ENCODE measurements at regions of chr18 and their contacts with region 1.

Region 1: GRCh38 chr18:35756506-35757117 is 175.1 kb downstream of the GALNT1 start:
- DNase-seq: peak; percentile 63
- H3K4me3 ChIP-seq: no peak overlapping the region
- H3K27ac ChIP-seq: no peak overlapping the region
- H3K4me1 ChIP-seq: no peaks in the 10 kb centered on the region
- H3K27me3 ChIP-seq: peaks cover 3 to 6% of the 10 kb centered on the region in 2 experiments
- CTCF ChIP-seq: peak; percentile 58 to 75
- POLR2A ChIP-seq: no peak

Region 2: DNA sequence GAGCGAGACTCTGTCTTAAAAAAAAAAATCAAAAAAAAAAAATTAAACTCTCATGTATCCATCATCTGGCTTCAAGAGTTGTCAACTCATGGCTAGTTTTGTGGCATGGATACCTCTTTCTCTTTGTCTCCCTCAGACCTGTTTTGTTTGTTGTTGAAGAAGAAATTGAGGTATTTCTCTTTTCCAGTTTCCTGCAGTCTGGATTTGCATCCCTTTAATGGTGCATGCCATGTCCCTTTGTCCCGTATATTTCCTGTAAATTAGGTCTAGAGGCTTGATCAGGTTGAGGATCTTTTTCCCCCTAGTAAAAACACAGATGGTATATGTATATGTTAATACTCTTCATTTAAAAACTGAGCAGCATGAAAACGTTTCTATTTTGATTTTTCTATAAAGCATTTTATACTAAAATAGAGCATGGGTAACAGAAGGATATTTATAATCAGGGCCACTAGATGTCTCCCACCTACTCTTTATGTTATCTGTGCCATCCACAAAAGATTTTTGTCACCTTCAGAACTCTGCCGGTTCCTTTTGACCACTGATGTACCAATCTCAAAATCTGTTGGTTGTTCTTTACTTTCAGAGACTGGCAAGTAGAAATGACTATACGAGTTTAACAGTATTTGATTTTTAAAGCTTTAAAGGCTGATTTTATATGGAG is 95.0 kb before region 1 on chr18:
- CTCF ChIA-PET with region 1: interaction called, 3 read pairs
- POLR2A ChIA-PET with region 1: no interaction called
- dilution Hi-C with region 1: no loop called
- intact Hi-C with region 1: loop called (anchors 1 kb)
- DNase-seq: peak; percentile 47
- H3K4me3 ChIP-seq: no peak overlapping the region
- H3K27ac ChIP-seq: no peak overlapping the region
- H3K4me1 ChIP-seq: peaks cover 15% of the 10 kb centered on the region
- H3K27me3 ChIP-seq: no peaks in the 10 kb centered on the region
- CTCF ChIP-seq: no peak
- POLR2A ChIP-seq: no peak

Region 3: DNA sequence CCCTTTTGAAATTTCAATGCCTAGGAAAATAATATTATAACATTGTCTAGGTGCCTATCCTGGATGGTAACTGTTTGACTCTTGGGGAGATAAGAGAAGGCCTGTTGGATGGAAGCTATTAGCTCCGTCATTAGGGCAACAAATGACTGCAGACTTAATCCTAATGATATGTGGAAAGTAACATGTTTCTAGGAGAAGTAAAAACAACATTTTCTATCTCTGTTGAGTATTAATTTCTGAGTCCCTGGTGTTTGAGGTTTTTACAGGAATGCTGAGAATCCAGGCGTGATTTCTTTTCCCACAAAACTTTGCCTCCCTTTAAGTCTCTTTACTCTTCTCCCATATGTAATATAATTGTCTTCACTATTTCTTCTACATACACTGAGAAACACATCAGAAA is 16.0 kb before region 1 on chr18:
- CTCF ChIA-PET with region 1: interaction called, 10 read pairs
- POLR2A ChIA-PET with region 1: no interaction called
- dilution Hi-C with region 1: no loop called
- intact Hi-C with region 1: no loop called
- DNase-seq: no peak
- H3K4me3 ChIP-seq: no peak overlapping the region
- H3K27ac ChIP-seq: no peak overlapping the region
- H3K4me1 ChIP-seq: no peaks in the 10 kb centered on the region
- H3K27me3 ChIP-seq: no peaks in the 10 kb centered on the region
- CTCF ChIP-seq: no peak
- POLR2A ChIP-seq: no peak

Region 4: DNA sequence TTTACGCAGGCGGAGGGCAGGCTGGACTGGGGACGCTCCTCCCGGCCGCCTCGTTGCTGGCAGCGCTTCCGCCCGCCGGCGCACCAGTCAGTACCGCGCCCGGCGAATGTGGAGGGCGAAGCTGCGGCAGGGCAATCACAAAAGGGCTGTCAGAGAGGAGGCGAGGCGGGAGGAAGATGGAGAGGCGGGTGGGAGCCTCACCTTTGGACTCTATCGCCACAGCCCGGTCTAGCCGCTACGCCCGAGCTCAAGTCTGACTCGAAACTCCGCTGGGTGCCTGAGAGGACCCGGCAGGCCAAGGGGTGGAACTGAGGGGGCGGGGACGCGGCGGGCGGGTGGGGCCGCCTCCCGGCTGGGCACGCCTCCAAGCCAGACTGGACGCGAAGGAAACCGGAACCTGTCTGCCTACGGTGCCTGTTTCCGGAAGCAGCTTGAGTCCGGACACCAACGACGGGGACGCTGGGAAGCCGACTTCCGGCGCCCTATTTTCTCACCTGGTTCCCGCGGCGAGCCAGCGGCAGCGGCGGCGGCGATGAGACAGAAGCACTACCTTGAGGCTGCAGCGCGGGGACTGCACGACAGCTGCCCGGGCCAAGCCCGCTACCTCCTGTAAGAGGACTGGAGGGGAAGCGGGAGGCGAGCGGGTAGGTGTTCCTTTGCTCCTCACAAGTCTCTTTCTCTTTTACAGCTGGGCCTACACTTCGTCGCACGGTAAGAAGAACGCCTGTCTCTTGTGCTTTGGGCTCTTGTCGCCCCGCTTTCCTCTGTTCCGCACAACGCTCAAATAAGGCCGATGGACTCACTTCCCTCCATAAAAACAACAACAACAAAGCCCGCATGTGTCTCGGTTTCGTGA is 215.8 kb after region 1 on chr18 and contains the start of gene RMP24:
- CTCF ChIA-PET with region 1: interaction called, 5 read pairs
- POLR2A ChIA-PET with region 1: no interaction called
- dilution Hi-C with region 1: no loop called
- intact Hi-C with region 1: loop called (anchors 1 kb)
- DNase-seq: peak; percentile 89
- H3K4me3 ChIP-seq: peak within 1 kb of the TSS; percentile 83 to 99 (median 91)
- H3K27ac ChIP-seq: peak within 1 kb of the TSS; percentile 91
- H3K4me1 ChIP-seq: peaks cover 18% of the 10 kb centered on the region
- H3K27me3 ChIP-seq: peaks cover 4% of the 10 kb centered on the region in 2 experiments
- CTCF ChIP-seq: no peak
- POLR2A ChIP-seq: peak; percentile 78